Activated CD8-positive, alpha-beta T cell treated with anti-CD3 and anti-CD28 coated beads, Interleukin-2, amount 10 ng/mL, durations not matched to agents 7 days and 5 days (primary cell): ENCODE measurements at regions of chr20 and their contacts with region 1.

Region 1: GRCh38 chr20:53708129-53708968 is 114.7 kb upstream of the ZNF217 start:
- DNase-seq: peak; percentile 68
- ATAC-seq: peak; percentile 66
- H3K4me3 Mint-ChIP-seq: peak overlapping the region; percentile 49
- H3K27ac Mint-ChIP-seq: peak overlapping the region; percentile 97
- H3K4me1 Mint-ChIP-seq: peaks cover 73% of the 10 kb centered on the region
- H3K27me3 Mint-ChIP-seq: no peaks in the 10 kb centered on the region

Region 2: GRCh38 chr20:53578492-53579222 is 129.7 kb before region 1 on chr20:
- CTCF ChIA-PET with region 1: interaction called, 12 read pairs
- POLR2A ChIA-PET with region 1: interaction called, 12 read pairs
- DNase-seq: peak; percentile 84
- ATAC-seq: peak; percentile 35
- H3K4me3 Mint-ChIP-seq: peak overlapping the region; percentile 80
- H3K27ac Mint-ChIP-seq: peak overlapping the region; percentile 81
- H3K4me1 Mint-ChIP-seq: peaks cover 87% of the 10 kb centered on the region
- H3K27me3 Mint-ChIP-seq: no peaks in the 10 kb centered on the region

Region 3: GRCh38 chr20:53623454-53624211 is 84.7 kb before region 1 on chr20:
- CTCF ChIA-PET with region 1: interaction called, 10 read pairs
- POLR2A ChIA-PET with region 1: interaction called, 4 read pairs
- DNase-seq: peak; percentile 56
- ATAC-seq: peak; percentile 75
- H3K4me3 Mint-ChIP-seq: peak overlapping the region; percentile 72
- H3K27ac Mint-ChIP-seq: peak overlapping the region; percentile 97
- H3K4me1 Mint-ChIP-seq: peaks cover 56% of the 10 kb centered on the region
- H3K27me3 Mint-ChIP-seq: no peaks in the 10 kb centered on the region

Region 4: DNA sequence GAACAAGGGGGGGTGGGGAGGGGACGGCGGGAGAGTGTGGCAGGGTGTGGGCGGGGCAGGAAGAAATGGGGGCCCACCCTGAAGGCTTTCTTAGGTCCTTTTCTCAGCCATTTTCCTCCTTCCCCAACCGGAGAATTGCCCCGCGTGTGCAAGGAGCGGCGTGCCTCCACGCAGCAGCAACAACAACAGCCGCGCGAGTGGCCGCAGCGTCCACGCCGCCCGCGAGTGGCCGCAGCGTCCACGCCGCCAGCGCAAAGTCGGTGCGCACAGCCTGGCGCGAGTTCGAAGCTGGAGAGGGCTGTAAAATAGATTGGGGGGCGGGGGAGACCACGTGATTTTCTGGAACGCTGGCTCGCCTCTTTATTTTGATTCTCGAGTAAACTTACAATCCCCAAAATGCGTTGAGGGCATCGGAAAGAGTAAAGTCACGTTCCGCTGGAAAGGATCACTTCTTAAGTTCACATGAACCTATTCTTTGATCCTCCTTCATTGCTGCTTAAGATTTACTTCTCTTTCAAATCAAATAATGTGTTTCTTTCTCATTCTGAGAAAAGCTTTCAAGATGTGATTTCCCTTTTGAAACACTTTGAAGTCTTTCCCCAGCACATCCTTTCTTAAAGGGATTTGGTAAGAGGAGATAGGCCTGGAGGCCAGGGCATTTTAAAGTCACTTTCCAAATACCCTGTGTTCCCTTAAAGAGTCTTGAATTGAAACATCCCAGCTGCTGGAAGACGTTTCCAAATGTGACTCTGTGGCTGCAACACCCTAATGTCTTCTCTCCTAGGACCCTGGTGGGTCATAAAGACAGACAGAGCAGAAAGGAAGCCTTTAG is 48.1 kb before region 1 on chr20:
- CTCF ChIA-PET with region 1: interaction called, 19 read pairs
- POLR2A ChIA-PET with region 1: interaction called, 7 read pairs
- DNase-seq: peak; percentile 70
- ATAC-seq: peak; percentile 54
- H3K4me3 Mint-ChIP-seq: peak overlapping the region; percentile 86
- H3K27ac Mint-ChIP-seq: peak overlapping the region; percentile 93
- H3K4me1 Mint-ChIP-seq: peaks cover 70% of the 10 kb centered on the region
- H3K27me3 Mint-ChIP-seq: no peaks in the 10 kb centered on the region

Region 5: GRCh38 chr20:53684971-53685797 is 23.2 kb before region 1 on chr20:
- CTCF ChIA-PET with region 1: interaction called, 8 read pairs
- POLR2A ChIA-PET with region 1: interaction called, 11 read pairs
- DNase-seq: no peak
- ATAC-seq: no peak
- H3K4me3 Mint-ChIP-seq: peak overlapping the region; percentile 61
- H3K27ac Mint-ChIP-seq: peak overlapping the region; percentile 85
- H3K4me1 Mint-ChIP-seq: peaks cover 44% of the 10 kb centered on the region
- H3K27me3 Mint-ChIP-seq: no peaks in the 10 kb centered on the region

Region 6: GRCh38 chr20:53738039-53738944 is 29.9 kb after region 1 on chr20:
- CTCF ChIA-PET with region 1: interaction called, 14 read pairs
- POLR2A ChIA-PET with region 1: interaction called, 8 read pairs
- DNase-seq: no peak
- ATAC-seq: no peak
- H3K4me3 Mint-ChIP-seq: no peak overlapping the region
- H3K27ac Mint-ChIP-seq: peak overlapping the region; percentile 91
- H3K4me1 Mint-ChIP-seq: peaks cover 71% of the 10 kb centered on the region
- H3K27me3 Mint-ChIP-seq: no peaks in the 10 kb centered on the region

Region 7: GRCh38 chr20:53750827-53751619 is 42.7 kb after region 1 on chr20:
- CTCF ChIA-PET with region 1: interaction called, 16 read pairs
- POLR2A ChIA-PET with region 1: interaction called, 20 read pairs
- DNase-seq: peak; percentile 77
- ATAC-seq: peak; percentile 76
- H3K4me3 Mint-ChIP-seq: peak overlapping the region; percentile 56
- H3K27ac Mint-ChIP-seq: peak overlapping the region; percentile 94
- H3K4me1 Mint-ChIP-seq: peaks cover 76% of the 10 kb centered on the region
- H3K27me3 Mint-ChIP-seq: no peaks in the 10 kb centered on the region